Cardiac septum (tissue), 1 donor: ENCODE measurements at regions of chr6 and their contacts with region 1.

Region 1: DNA sequence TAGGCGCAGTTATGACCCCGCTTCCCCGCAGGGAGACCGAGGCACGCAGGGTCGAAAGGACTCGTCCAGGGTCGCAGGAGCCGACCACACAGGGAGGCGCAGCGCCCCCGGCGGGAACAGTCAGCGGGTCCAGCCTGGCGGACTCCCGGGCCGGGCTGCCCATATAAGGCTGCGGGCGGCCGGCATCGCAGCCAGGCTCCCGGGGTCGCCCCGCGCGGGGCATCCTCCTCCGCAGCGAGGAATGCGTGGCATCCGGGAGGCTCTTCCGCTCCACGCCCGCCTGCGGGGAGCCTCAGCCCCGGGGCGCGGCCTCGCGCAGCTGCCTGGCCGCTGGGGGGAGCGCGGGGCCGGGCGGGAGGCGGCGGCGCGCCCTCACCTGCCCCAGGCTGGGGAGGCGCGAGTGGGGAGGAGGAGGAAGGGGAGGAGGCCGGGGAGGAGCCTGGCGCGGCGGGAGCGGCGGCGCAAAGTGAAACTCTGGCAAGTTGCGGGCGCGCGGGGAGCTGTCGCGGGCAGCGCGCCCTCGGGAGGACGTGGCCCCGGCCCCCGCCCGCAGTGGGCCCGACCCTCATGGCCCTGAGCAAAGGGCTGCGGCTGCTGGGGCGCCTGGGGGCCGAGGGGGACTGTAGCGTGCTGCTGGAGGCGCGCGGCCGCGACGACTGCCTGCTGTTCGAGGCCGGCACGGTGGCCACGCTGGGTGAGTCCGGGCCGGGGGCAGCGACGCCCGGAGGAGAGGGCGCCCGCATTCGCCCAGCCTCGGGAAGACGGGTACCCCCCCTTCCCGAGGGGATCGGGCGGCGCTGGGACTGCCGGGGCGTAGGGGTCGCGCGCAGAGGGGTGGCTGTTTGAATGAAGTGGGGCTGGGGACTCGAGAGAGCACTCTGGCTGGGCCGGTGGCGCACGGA is at the start of gene SYNJ2:
- DNase-seq: peak; percentile 94
- total RNA-seq, gene SYNJ2: 24.0 TPM

Region 2: DNA sequence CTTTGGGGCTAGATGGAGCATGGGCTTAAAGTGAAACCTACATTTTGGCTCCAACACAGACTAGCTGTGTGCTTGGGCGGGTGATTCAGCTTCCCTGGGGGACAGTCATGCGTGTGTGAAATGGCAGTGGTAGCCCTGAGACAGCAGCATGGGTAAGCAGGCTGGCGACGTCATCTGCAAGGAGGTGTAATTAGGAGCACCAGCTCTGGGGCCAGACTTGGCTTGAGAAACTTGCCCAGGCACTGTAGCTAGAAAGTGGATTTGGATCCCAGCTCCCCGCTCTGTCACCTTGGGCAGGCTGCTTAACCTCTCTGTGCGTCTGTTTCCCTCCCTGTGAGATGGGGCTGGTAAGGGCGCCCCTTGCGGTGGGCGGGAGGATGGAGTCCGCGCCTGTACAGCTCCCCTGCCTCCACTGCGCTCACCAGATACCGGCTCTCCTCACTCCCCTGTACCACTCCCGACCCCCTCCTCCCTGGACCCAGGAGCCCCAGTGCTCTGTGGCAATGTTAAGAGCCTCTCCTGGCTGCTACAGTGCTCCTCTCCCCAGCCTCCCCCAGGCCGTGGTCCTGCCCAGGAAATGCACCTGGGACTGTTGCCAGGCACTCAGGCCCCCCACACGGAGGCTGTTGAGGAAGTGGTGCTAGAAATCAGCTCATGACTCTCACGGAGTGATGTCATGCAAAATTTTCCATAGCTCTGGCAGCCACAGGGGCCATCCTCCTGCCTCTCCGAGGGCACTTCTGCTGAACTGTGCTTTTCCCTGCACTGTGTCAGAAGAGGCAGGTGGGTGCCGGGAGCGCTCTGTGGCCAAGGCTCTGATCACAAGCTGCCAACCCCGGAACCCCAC is 44.6 kb after region 1 on chr6:
- intact Hi-C with region 1: loop called (anchors 5 kb)
- DNase-seq: peak; percentile 91

Region 3: GRCh38 chr6:158072083-158072721 is 90.6 kb after region 1 on chr6:
- intact Hi-C with region 1: loop called (anchors 5 kb)
- DNase-seq: peak; percentile 90